ENCODE measurements at regions of chr2 and their contacts with region 1.

Region 1: DNA sequence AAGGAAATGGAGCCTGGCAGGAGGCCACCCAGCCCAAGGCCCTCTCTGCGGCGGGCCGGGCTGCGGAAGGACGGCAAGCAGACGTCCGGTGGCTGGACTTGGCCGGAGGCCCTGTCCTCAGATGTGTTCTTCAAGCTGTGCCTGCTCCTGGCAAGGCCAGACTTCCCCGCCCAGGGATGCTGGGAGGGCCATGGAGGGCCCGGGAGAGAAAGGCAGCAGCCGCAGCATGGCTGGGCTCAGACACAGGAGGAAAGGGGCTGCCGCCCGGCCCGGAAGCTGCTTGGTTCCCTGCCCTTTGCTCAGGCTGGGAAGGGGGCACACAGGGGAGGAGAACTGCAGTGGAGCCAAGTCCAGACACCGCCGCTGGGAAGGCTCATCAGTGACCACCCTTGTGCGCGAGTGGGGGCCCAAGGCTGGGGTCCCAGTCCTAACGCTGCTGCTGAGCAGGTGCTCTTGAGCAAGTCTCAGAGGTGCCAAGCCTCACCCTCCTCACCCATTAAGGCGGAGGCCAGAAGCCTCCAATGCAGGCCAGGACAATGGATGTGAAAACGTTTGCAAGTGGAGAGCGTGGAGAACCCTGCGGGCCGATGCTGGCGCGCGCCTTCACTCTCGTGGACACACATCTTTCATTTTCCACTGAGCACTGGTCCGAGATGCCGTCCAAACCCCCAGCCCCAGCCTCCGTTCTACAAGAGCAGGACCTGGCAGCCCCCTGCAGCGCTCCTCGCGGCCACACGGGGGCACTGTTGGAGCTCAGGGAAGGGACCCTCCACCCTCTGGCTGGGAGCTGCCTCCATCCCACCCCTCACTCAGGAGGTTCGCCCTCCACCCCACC is 7.9 kb downstream of the CROCC2 start:
- DNase-seq: peak; percentile 87 to 90
- ATAC-seq: peak; percentile 80
- H3K4me3 ChIP-seq: no peak overlapping the region
- H3K27ac ChIP-seq: no peak overlapping the region
- H3K4me1 ChIP-seq: no peaks in the 10 kb centered on the region
- H3K27me3 ChIP-seq: no peaks in the 10 kb centered on the region

Region 2: DNA sequence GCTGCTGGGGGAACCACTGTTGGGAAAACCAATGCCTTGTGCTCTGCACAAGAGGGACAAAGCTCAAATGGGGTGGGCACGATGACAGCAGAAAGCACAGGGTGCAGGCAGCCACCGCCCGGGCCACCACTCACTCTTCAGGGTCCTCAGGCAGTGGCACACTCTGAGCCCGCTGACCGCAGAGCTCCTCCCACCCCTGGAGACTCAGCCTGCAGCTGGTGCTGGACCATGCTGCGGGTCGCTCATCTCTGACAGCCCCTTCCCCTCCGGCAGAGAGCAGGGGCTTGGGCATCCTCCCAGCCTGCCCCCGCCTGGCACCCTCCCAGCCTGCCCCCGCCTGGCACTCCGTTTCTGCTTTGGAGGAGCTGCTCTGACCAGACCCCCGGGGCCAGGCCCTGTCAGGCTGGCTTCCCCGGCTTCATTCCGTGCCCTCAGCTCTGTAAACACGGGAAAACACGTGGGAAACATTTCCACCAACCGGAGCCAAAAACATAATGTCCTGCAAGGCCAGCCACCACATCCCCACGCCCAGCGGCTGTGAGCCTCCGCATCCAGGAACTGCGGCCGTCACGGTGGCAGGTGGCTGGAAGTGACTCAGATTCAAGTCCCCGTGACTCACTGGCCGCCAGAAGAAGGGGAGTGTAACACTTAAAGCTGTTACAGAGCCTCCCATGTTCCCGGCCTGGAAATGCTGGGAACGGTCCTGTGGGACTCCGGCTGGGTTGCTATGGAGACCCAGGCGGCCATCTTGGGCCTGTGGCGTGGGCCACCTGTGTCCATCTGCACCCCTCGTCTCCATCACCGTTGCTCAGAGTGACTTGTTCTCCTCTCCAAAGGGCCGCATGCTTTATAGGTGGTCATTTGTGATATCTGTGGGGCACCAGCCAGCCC is 77.6 kb after region 1 on chr2:
- intact Hi-C with region 1: loop called in 1 of 2 experiments (anchors 5 kb)
- DNase-seq: peak; percentile 96 to 97
- ATAC-seq: peak; percentile 87
- H3K4me3 ChIP-seq: no peak overlapping the region
- H3K27ac ChIP-seq: peak overlapping the region; percentile 47 to 94
- H3K4me1 ChIP-seq: peaks cover 0 to 6% of the 10 kb centered on the region in 2 donors
- H3K27me3 ChIP-seq: no peaks in the 10 kb centered on the region

Region 3: GRCh38 chr2:241049739-241050623 is 136.0 kb after region 1 on chr2:
- intact Hi-C with region 1: loop called in 1 of 2 experiments (anchors 10 kb)
- DNase-seq: peak in 1 of 2 donors; percentile 72
- ATAC-seq: no peak
- H3K4me3 ChIP-seq: no peak overlapping the region
- H3K27ac ChIP-seq: no peak overlapping the region
- H3K4me1 ChIP-seq: no peaks in the 10 kb centered on the region
- H3K27me3 ChIP-seq: no peaks in the 10 kb centered on the region